OCI-LY7 (cell line): ENCODE measurements at regions of chr16 and their contacts with region 1.

Region 1: GRCh38 chr16:23803591-23804123 is 32.1 kb upstream of the PRKCB start:
- DNase-seq: peak; percentile 87
- H3K4me3 ChIP-seq: peak overlapping the region; percentile 24
- H3K27ac ChIP-seq: no peak overlapping the region
- H3K4me1 ChIP-seq: peaks cover 48% of the 10 kb centered on the region
- CTCF ChIP-seq: peak; percentile 95

Region 2: GRCh38 chr16:23781177-23781576 is 22.5 kb before region 1 on chr16:
- CTCF ChIA-PET with region 1: no interaction called
- POLR2A ChIA-PET with region 1: no interaction called
- intact Hi-C with region 1: no loop called
- DNase-seq: no peak
- H3K4me3 ChIP-seq: no peak overlapping the region
- H3K27ac ChIP-seq: no peak overlapping the region
- H3K4me1 ChIP-seq: no peaks in the 10 kb centered on the region
- CTCF ChIP-seq: no peak

Region 3: GRCh38 chr16:23835390-23836077 is 31.9 kb after region 1 on chr16 and contains the start of gene PRKCB:
- CTCF ChIA-PET with region 1: no interaction called
- POLR2A ChIA-PET with region 1: interaction called, 5 read pairs
- intact Hi-C with region 1: loop called (anchors 1 kb)
- DNase-seq: peak; percentile 92
- H3K4me3 ChIP-seq: peak within 1 kb of the TSS; percentile 85
- H3K27ac ChIP-seq: peak within 1 kb of the TSS; percentile 18
- H3K4me1 ChIP-seq: peaks cover 46% of the 10 kb centered on the region
- CTCF ChIP-seq: no peak
- total RNA-seq, gene PRKCB: 21.0 and 24.2 TPM in 2 replicates

Region 4: DNA sequence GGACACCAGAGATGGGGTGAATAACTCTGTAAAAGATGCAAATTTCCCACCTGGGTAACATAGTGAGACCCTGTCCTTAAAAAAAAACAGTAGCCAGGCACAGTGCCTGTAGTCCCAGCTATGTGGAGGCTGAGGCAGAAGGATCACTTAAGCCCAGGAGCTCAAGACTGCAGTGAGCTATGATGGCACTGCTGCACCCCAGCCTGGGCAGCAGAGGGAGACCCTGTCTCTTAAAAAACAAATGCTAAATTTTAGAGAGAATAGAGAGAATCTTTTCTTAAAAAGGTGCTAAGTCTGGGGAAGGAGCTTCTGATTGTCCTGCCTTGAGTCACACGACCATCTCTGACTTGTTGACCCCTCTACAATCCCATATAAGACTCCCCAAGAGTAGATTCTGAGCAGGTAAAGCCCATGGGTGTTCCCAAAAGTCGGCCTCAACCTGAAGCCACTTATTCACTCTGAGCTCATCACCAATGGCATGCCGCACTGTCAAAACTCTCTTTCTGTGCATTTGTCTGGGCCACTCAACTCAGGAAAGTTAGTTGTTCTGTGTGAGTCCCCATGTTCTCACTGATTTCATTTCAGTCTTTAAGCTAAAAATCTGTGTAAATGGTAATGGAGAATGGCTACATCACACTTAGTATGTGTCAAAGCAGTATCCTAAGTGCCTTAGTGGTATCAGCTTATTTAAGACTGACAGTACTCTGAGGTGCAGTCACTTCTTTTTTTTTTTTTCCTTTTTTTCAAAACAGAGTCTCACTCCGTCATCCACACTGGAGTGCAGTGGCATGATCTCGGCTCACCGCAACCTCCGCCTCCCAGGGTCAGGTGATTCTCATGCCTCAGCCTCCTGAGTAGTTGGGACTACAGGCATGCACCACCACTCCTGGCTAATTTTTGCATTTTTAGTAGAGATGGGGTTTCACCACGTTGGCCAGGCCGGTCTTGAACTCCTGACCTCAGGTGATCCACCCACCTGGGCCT is 73.7 kb after region 1 on chr16:
- CTCF ChIA-PET with region 1: no interaction called
- POLR2A ChIA-PET with region 1: interaction called, 4 read pairs
- intact Hi-C with region 1: loop called (anchors 5 kb)
- DNase-seq: peak; percentile 39
- H3K4me3 ChIP-seq: no peak overlapping the region
- H3K27ac ChIP-seq: no peak overlapping the region
- H3K4me1 ChIP-seq: peaks cover 68% of the 10 kb centered on the region
- CTCF ChIP-seq: peak; percentile 68

Region 5: DNA sequence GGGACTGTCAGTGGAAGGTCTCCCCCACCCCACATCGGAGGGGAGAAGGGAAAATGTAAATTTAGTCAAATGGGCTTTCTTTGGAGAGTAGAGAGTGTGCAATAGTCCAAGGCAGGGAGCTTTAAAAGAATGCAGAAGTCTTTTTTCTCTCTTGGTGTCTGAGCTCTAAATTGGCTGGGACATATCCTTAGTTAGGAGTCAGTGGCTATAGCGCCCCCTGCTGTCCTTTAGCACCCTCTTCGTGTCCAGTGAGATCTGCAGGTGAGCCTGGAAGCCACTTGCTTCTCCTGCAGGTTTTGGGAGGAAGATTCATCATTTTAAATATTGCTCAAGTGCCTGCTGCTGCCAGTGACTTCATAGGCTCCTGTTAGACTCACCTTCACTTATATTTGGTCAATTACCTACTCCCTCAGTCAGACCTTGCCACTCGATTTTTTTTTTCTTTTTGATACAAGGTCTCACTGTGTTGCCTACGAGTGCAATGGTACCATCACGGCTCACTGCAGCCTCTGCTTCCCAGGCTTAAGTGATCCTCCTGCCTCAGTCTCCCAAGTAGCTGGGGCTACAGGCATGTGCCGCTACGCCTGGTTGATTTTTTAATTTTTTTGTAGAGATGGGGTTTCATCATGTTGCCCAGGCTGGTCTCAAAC is 206.9 kb after region 1 on chr16:
- CTCF ChIA-PET with region 1: interaction called, 11 read pairs
- POLR2A ChIA-PET with region 1: interaction called, 12 read pairs
- intact Hi-C with region 1: loop called (anchors 1 kb)
- DNase-seq: peak; percentile 91
- H3K4me3 ChIP-seq: no peak overlapping the region
- H3K27ac ChIP-seq: no peak overlapping the region
- H3K4me1 ChIP-seq: peaks cover 58% of the 10 kb centered on the region
- CTCF ChIP-seq: peak; percentile 96

Region 6: DNA sequence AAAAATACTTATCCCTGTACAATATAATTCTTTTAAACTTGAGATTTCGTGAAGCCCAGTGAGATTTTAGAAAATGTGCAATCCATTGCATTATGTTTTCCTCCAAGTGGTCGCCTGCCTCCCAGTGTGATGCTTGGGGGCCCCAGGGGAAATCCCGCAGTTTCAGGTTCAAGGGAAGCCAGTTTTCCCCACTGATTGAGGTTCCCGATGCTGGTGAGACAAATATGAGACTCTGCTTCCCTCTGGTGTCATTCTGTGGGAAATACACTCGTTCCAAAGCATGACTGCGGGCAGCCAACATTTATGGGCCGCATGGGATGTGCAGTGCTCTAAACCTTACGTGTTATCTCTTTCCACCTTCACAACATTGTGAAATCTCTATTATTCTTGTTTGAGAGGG is 233.0 kb after region 1 on chr16:
- CTCF ChIA-PET with region 1: interaction called, 8 read pairs
- POLR2A ChIA-PET with region 1: interaction called, 4 read pairs
- intact Hi-C with region 1: loop called (anchors 1 kb)
- DNase-seq: peak; percentile 55
- H3K4me3 ChIP-seq: no peak overlapping the region
- H3K27ac ChIP-seq: no peak overlapping the region
- H3K4me1 ChIP-seq: no peaks in the 10 kb centered on the region
- CTCF ChIP-seq: peak; percentile 81

Region 7: GRCh38 chr16:24253192-24253591 is 449.5 kb after region 1 on chr16:
- CTCF ChIA-PET with region 1: no interaction called
- POLR2A ChIA-PET with region 1: no interaction called
- intact Hi-C with region 1: loop called (anchors 5 kb)
- DNase-seq: peak; percentile 78
- H3K4me3 ChIP-seq: no peak overlapping the region
- H3K27ac ChIP-seq: no peak overlapping the region
- H3K4me1 ChIP-seq: peaks cover 35% of the 10 kb centered on the region
- CTCF ChIP-seq: peak; percentile 86

Region 8: DNA sequence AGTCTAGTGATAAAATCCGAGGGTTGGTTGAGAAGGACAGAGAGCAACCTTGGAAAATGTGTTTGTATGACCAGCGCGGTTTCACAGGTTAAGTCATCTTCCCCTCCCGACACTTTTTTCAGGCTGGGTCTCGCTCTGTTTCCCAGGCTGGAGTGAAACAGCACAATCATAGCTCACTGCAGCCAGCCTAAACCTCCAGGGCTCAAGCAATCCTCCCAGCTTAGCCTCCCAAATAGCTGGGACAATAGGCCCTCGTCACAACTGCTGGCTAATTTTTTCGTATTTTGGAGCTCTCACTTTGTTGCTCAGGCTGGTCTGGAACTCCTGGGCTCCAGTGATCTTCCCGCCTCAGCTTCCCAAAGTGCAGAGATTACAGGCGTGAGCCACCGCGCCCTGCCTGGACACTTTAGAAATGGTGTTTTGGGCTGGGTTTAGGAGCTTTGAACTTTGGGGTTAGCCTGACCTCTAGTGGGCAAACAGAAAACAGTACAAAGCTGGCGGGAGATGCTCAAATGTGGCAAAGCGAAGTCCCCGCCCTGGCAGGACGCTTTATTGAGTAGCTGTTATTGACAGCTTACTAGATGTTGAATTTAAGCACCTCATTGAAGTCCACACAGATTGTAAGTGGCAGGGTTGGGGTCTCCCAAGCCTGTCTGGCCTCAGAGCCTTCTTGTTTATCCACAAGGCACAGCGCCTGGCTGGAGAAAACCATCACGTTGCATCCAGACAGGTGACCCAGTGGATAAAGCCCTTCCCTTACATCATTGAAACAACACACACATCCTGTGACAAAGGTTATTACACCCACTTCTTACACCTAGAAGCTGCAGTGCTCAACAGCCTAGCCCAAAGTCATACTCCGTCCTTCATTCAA is 701.1 kb after region 1 on chr16:
- CTCF ChIA-PET with region 1: no interaction called
- POLR2A ChIA-PET with region 1: no interaction called
- intact Hi-C with region 1: loop called (anchors 2 kb)
- DNase-seq: peak; percentile 70
- H3K4me3 ChIP-seq: no peak overlapping the region
- H3K27ac ChIP-seq: no peak overlapping the region
- H3K4me1 ChIP-seq: no peaks in the 10 kb centered on the region
- CTCF ChIP-seq: peak; percentile 86